CD14-positive monocyte (primary cell): ENCODE measurements at regions of chr2 and their contacts with region 1.

Region 1: DNA sequence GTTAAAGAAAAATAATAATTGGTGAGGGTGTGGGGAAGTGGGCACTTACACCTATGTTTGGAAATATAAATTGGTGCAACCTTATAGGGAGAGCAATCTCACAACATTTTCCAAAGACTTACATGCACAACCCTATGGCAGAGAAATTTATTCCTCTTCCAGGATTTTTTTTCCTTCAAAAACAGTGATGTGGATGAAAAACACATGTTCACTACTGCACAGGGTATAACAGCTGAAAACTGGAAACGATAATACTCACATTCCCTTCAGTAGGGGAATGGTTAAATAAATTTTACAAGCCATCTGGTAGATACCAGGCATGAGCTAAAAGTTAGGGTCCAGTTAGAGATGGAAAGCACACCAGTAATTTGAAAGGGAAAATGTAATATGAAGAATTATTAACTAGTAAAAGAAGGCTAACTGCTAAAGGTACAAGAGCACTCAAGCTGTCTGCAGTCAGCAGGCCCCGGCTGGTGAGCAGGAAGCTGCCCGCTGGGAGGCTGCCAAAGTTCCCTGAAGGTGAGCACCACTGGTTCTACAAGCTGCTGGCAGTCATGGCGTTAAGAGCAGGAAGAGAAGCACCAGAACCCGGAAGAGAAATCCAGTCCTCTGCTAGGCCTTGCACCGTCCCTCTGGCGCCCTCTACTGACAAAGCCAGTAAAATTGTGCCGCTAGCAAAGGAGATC is 28.4 kb upstream of the CASP8 start:
- DNase-seq: peak; percentile 91 to 97 (median 95)
- H3K4me3 ChIP-seq: peak overlapping the region in 1 of 3 experiments; percentile 45
- H3K4me3 Mint-ChIP-seq: no peak overlapping the region
- H3K27ac ChIP-seq: peak overlapping the region; percentile 45 to 76
- H3K27ac Mint-ChIP-seq: peak overlapping the region; percentile 72 to 94 (median 88)
- H3K4me1 ChIP-seq: peaks cover 50 to 61% of the 10 kb centered on the region in 2 donors
- H3K4me1 Mint-ChIP-seq: peaks cover 56% of the 10 kb centered on the region
- H3K27me3 ChIP-seq: no peaks in the 10 kb centered on the region
- H3K27me3 Mint-ChIP-seq: peaks cover 0 to 2% (median 0%) of the 10 kb centered on the region in 3 donors
- CTCF ChIP-seq: peak; percentile 87

Region 2: GRCh38 chr2:200901459-200902072 is 330.4 kb before region 1 on chr2:
- intact Hi-C with region 1: loop called in 1 of 2 experiments (anchors 10 kb)
- DNase-seq: peak; percentile 75 to 79 (median 76)
- H3K4me3 ChIP-seq: no peak overlapping the region
- H3K4me3 Mint-ChIP-seq: no peak overlapping the region
- H3K27ac ChIP-seq: no peak overlapping the region
- H3K27ac Mint-ChIP-seq: peak overlapping the region in 5 of 7 donors; percentile 7 to 88 (median 47)
- H3K4me1 ChIP-seq: peaks cover 8 to 11% of the 10 kb centered on the region in 2 donors
- H3K4me1 Mint-ChIP-seq: peaks cover 13% of the 10 kb centered on the region
- H3K27me3 ChIP-seq: no peaks in the 10 kb centered on the region
- H3K27me3 Mint-ChIP-seq: no peaks in the 10 kb centered on the region
- CTCF ChIP-seq: peak; percentile 88

Region 3: DNA sequence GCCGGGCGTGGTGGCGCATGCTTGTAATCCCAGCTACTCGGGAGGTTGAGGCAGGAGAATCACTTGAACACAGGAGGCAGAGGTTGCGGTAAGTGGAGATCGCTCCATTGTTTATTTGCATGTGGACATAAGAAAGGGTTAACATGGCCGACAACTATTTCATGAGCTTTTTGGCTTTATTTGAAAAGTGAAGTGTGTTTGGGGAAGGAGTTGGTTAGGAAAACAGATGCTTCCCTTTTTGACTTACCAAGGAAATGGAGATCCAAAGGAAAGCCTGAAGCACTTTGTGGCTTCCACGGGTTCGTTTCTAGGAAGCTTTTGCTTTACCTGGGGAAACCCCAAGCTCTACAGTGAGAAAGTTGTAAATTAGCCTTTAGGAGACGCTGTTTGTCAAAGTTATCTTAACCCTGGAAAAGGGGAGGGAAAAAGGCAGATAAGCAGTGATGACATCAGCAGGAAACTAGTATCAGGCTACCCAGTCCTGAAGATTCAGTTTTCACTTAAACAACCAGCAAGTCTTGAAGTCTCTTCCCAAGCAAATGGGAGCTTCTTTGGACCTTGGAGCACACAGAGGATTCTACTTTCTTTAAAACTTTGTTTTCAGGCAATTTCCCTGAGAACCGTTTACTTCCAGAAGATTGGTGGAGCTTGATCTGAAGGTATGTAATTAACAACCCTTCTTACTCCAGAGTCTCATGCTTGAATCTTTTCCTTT is 49.1 kb before region 1 on chr2 and contains the start of gene CASP10:
- intact Hi-C with region 1: loop called (anchors 5 kb)
- DNase-seq: peak; percentile 48 to 74 (median 74)
- H3K4me3 ChIP-seq: peak within 1 kb of the TSS; percentile 76 to 99 (median 88)
- H3K4me3 Mint-ChIP-seq: peak within 1 kb of the TSS; percentile 84 to 95
- H3K27ac ChIP-seq: peak within 1 kb of the TSS in 1 of 2 donors; percentile 80
- H3K27ac Mint-ChIP-seq: peak within 1 kb of the TSS; percentile 84 to 93 (median 92)
- H3K4me1 ChIP-seq: peaks cover 28 to 58% of the 10 kb centered on the region in 2 donors
- H3K4me1 Mint-ChIP-seq: peaks cover 52% of the 10 kb centered on the region
- H3K27me3 ChIP-seq: no peaks in the 10 kb centered on the region
- H3K27me3 Mint-ChIP-seq: peaks cover 0 to 2% (median 0%) of the 10 kb centered on the region in 3 donors
- CTCF ChIP-seq: peak; percentile 46
- polyA plus RNA-seq, gene CASP10: 17.7 to 23.3 (median 18.9) TPM

Region 4: GRCh38 chr2:201194097-201194496 is 37.8 kb before region 1 on chr2:
- intact Hi-C with region 1: loop called in 1 of 2 experiments (anchors 5 kb)
- DNase-seq: peak; percentile 29 to 54 (median 32)
- H3K4me3 ChIP-seq: peak overlapping the region in 1 of 3 experiments; percentile 12
- H3K4me3 Mint-ChIP-seq: peak overlapping the region in 1 of 2 donors; percentile 57
- H3K27ac ChIP-seq: peak overlapping the region in 1 of 2 donors; percentile 68
- H3K27ac Mint-ChIP-seq: peak overlapping the region; percentile 73 to 84 (median 79)
- H3K4me1 ChIP-seq: peaks cover 26 to 38% of the 10 kb centered on the region in 2 donors
- H3K4me1 Mint-ChIP-seq: peaks cover 44% of the 10 kb centered on the region
- H3K27me3 ChIP-seq: no peaks in the 10 kb centered on the region
- H3K27me3 Mint-ChIP-seq: no peaks in the 10 kb centered on the region
- CTCF ChIP-seq: no peak

Region 5: DNA sequence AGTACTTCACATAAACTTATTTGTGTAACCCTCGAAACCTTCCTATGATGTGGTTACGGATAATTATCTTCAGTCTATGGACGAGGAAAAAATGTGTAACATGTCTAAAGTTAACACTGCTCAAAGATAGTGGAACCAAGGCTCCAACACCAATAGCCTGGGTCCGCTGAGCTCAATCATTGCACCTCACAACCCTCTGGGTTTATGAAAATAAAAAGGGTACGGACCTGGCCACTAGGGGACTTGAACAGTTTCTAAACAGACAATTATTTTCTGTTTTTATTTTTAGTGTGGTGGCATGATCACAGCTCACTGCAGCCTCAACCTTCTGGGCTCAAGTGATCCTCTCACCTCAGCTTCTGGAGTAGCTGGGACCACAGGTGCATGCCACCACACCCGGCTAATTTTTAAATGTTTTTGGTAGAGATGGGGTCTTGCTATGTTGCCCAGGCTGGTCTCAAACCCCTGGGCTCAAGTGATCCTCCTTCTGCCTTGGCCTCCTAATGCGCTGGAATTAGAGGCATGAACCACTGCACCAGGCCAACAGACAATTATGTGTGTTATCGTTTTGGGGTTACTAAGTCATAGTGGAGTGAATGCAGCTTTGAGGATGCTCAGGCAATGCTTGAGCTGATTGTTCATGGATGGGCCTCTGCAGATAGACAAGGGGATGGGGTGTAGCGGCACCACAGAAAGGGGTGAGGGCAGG is 38.5 kb after region 1 on chr2:
- intact Hi-C with region 1: loop called in 1 of 2 experiments (anchors 5 kb)
- DNase-seq: no peak
- H3K4me3 ChIP-seq: no peak overlapping the region
- H3K4me3 Mint-ChIP-seq: no peak overlapping the region
- H3K27ac ChIP-seq: peak overlapping the region in 1 of 2 donors; percentile 64
- H3K27ac Mint-ChIP-seq: peak overlapping the region in 3 of 7 donors; percentile 51 to 73 (median 69)
- H3K4me1 ChIP-seq: no peaks in the 10 kb centered on the region
- H3K4me1 Mint-ChIP-seq: peaks cover 19% of the 10 kb centered on the region
- H3K27me3 ChIP-seq: no peaks in the 10 kb centered on the region
- H3K27me3 Mint-ChIP-seq: peaks cover 0 to 3% (median 0%) of the 10 kb centered on the region in 3 donors
- CTCF ChIP-seq: no peak

Region 6: DNA sequence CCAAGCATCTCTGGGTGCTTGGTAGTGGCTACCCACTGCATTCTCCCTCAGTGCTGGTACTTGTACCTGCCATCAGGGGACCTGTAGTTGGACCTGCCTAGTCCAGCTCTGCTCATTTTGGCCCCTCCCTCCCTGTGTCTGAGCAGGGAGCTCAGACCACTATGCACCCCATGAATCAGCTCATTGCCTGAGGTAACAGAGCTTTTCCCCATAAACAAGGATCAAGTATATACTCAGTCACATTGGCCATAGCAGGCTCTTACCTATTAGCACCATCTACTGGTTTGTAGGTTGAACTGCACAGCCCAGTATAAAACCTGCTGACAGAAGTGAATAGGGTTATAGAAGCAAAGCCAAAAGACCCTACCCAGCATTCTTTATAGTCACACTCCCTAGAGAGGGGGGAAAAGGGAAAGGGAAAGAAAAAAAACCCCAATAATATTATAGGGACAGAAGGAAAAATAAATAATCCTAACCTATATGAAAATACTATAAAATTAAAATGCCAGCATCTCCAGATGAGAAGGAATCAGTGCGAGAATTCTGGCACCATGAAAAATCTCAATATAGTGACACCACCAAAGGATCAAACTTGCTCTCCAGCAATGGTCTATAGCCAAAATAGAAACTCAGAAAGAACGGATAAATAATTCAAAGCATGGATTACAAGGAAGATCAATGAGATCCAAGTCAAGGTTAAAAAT is 132.1 kb after region 1 on chr2:
- intact Hi-C with region 1: loop called (anchors 5 kb)
- DNase-seq: peak; percentile 35 to 61 (median 56)
- H3K4me3 ChIP-seq: no peak overlapping the region
- H3K4me3 Mint-ChIP-seq: no peak overlapping the region
- H3K27ac ChIP-seq: peak overlapping the region in 1 of 2 donors; percentile 4
- H3K27ac Mint-ChIP-seq: peak overlapping the region in 2 of 7 donors; percentile 16 to 34
- H3K4me1 ChIP-seq: no peaks in the 10 kb centered on the region
- H3K4me1 Mint-ChIP-seq: peaks cover 2% of the 10 kb centered on the region
- H3K27me3 ChIP-seq: no peaks in the 10 kb centered on the region
- H3K27me3 Mint-ChIP-seq: peaks cover 0 to 2% (median 0%) of the 10 kb centered on the region in 3 donors
- CTCF ChIP-seq: peak; percentile 91

Region 7: GRCh38 chr2:201451292-201452057 is 219.6 kb after region 1 on chr2 and contains the starts of genes STRADB and TRAK2:
- intact Hi-C with region 1: loop called in 1 of 2 experiments (anchors 10 kb)
- DNase-seq: peak; percentile 91 to 96 (median 94)
- H3K4me3 ChIP-seq: peak within 1 kb of the TSS; percentile 76 to 94 (median 82)
- H3K4me3 Mint-ChIP-seq: peak within 1 kb of the TSS; percentile 94 to 97
- H3K27ac ChIP-seq: peak within 1 kb of the TSS; percentile 79 to 90
- H3K27ac Mint-ChIP-seq: peak within 1 kb of the TSS; percentile 91 to 99 (median 96)
- H3K4me1 ChIP-seq: peaks cover 12 to 19% of the 10 kb centered on the region in 2 donors
- H3K4me1 Mint-ChIP-seq: peaks cover 22% of the 10 kb centered on the region
- H3K27me3 ChIP-seq: no peaks in the 10 kb centered on the region
- H3K27me3 Mint-ChIP-seq: peaks cover 0 to 2% (median 2%) of the 10 kb centered on the region in 3 donors
- CTCF ChIP-seq: peak; percentile 30
- polyA plus RNA-seq, gene STRADB: 6.9 to 25.6 (median 22.0) TPM
- polyA plus RNA-seq, gene TRAK2: 7.6 to 16.8 (median 15.3) TPM